Activated CD4-positive, alpha-beta memory T cell treated with anti-CD3 and anti-CD28 coated beads for 36 hours (primary cell): ENCODE measurements at regions of chr3 and their contacts with region 1.

Region 1: GRCh38 chr3:177787279-177788041 is 590.2 kb upstream of the TBL1XR1 start:
- DNase-seq: no peak
- H3K4me3 Mint-ChIP-seq: no peak overlapping the region
- H3K27ac Mint-ChIP-seq: no peak overlapping the region
- H3K4me1 Mint-ChIP-seq: peaks cover 16% of the 10 kb centered on the region
- H3K27me3 Mint-ChIP-seq: no peaks in the 10 kb centered on the region

Region 2: DNA sequence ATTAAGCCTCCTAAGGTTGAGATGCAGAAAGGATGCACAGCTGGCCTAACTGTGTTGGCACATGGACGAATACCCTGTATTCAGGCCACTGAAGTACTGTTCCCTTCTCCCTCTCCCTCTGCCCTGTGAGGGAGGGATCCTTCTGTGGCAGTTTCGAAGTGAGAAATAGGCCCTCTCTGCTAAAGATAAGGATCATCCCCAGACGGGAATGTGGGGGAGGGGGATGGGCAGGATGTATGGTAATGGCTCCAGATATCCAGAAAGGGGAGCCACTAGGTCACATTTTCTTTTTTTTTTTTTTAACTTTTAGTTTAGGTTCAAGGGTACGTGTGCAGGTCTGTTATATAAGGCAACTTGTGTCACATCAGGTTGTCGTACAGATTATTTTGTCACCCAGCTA is 1053.3 kb before region 1 on chr3:
- CTCF ChIA-PET with region 1: no interaction called
- POLR2A ChIA-PET with region 1: no interaction called
- intact Hi-C with region 1: no loop called
- DNase-seq: no peak
- H3K4me3 Mint-ChIP-seq: no peak overlapping the region
- H3K27ac Mint-ChIP-seq: no peak overlapping the region
- H3K4me1 Mint-ChIP-seq: no peaks in the 10 kb centered on the region
- H3K27me3 Mint-ChIP-seq: peaks cover 2% of the 10 kb centered on the region

Region 3: GRCh38 chr3:177679568-177680441 is 107.7 kb before region 1 on chr3:
- CTCF ChIA-PET with region 1: no interaction called
- POLR2A ChIA-PET with region 1: interaction called, 5 read pairs
- intact Hi-C with region 1: loop called (anchors 1 kb)
- DNase-seq: peak; percentile 64
- H3K4me3 Mint-ChIP-seq: no peak overlapping the region
- H3K27ac Mint-ChIP-seq: peak overlapping the region; percentile 69
- H3K4me1 Mint-ChIP-seq: peaks cover 21% of the 10 kb centered on the region
- H3K27me3 Mint-ChIP-seq: no peaks in the 10 kb centered on the region

Region 4: GRCh38 chr3:177824190-177824786 is 36.8 kb after region 1 on chr3:
- CTCF ChIA-PET with region 1: interaction called, 3 read pairs
- POLR2A ChIA-PET with region 1: no interaction called
- intact Hi-C with region 1: loop called (anchors 5 kb)
- DNase-seq: no peak
- H3K4me3 Mint-ChIP-seq: no peak overlapping the region
- H3K27ac Mint-ChIP-seq: no peak overlapping the region
- H3K4me1 Mint-ChIP-seq: peaks cover 15% of the 10 kb centered on the region
- H3K27me3 Mint-ChIP-seq: no peaks in the 10 kb centered on the region

Region 5: DNA sequence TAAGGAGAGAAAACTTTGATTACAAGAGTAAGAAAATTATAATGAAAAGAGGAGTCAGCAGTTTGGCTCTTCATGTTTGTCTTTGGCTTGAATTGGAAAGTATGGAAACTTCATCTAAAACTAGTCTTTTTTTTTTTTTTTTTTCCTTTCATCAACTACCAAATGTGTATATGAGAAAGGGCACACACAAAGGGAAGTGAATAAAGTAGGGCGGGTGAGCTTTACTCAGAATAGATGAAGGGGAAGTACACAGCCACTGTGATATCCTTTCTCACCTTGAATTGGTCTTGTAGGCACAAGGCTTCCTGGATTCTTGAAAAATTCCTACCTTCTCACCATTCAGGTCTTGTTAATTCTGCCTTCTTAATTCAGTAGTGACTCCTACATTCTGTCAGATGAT is 96.5 kb after region 1 on chr3:
- CTCF ChIA-PET with region 1: no interaction called
- POLR2A ChIA-PET with region 1: no interaction called
- intact Hi-C with region 1: loop called (anchors 1 kb)
- DNase-seq: no peak
- H3K4me3 Mint-ChIP-seq: no peak overlapping the region
- H3K27ac Mint-ChIP-seq: no peak overlapping the region
- H3K4me1 Mint-ChIP-seq: peaks cover 19% of the 10 kb centered on the region
- H3K27me3 Mint-ChIP-seq: no peaks in the 10 kb centered on the region

Region 6: GRCh38 chr3:177994976-177995375 is 207.5 kb after region 1 on chr3:
- CTCF ChIA-PET with region 1: no interaction called
- POLR2A ChIA-PET with region 1: no interaction called
- intact Hi-C with region 1: loop called (anchors 2 kb)
- DNase-seq: no peak
- H3K4me3 Mint-ChIP-seq: no peak overlapping the region
- H3K27ac Mint-ChIP-seq: no peak overlapping the region
- H3K4me1 Mint-ChIP-seq: peaks cover 25% of the 10 kb centered on the region
- H3K27me3 Mint-ChIP-seq: no peaks in the 10 kb centered on the region